Endothelial cell of umbilical vein (primary cell): ENCODE measurements at regions of chr6 and their contacts with region 1.

Region 1: GRCh38 chr6:31366693-31367470 is 9.9 kb upstream of the HLA-B start:
- DNase-seq: peak; percentile 80
- H3K4me3 ChIP-seq: no peak overlapping the region
- H3K27ac ChIP-seq: no peak overlapping the region
- H3K4me1 ChIP-seq: no peaks in the 10 kb centered on the region
- H3K27me3 ChIP-seq: peaks cover 39 to 44% of the 10 kb centered on the region in 2 experiments
- CTCF ChIP-seq: peak; percentile 93 to 95
- POLR2A ChIP-seq: no peak

Region 2: GRCh38 chr6:31143148-31143547 is 223.7 kb before region 1 on chr6:
- CTCF ChIA-PET with region 1: interaction called, 33 read pairs
- POLR2A ChIA-PET with region 1: no interaction called
- dilution Hi-C with region 1: no loop called
- intact Hi-C with region 1: no loop called
- DNase-seq: no peak
- H3K4me3 ChIP-seq: no peak overlapping the region
- H3K27ac ChIP-seq: no peak overlapping the region
- H3K4me1 ChIP-seq: peaks cover 8% of the 10 kb centered on the region
- H3K27me3 ChIP-seq: no peaks in the 10 kb centered on the region
- CTCF ChIP-seq: no peak
- POLR2A ChIP-seq: no peak

Region 3: DNA sequence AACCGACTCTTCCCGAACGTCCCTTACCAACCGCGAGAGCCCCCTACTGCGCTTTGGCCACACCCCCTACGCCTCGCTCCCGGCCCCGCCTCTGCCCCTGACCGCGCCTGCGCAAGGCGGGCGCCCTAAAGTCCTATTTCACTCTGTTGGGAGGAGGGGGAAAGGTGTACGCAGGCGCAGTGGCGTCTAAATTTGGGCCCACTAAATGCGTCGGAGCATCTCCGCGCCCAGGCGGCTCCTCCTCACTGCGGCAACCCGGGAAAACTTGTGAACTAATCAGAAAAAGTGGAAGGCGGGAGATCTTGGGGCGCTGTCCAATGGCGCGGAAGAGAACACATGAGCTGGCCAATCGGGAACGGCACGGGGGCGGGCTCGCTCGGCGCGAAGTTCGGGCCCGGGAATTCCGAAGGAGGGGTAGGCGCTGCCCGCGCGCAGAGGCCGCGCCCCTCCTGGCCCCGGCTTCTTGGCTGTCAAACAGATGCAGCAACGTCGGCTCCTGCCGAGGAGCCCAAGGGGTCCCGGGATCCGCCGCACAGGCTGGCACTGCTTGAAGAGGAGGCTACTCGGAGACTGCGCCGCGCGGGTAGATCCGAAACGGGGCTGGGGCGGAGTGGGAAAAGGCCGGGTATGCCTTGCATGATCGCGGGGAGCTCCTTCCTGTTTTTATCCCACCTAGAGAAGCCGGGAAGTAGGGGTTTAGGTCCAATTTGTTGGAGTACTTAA is 208.6 kb before region 1 on chr6 and contains the start of gene TCF19:
- CTCF ChIA-PET with region 1: interaction called, 10 read pairs
- POLR2A ChIA-PET with region 1: no interaction called
- dilution Hi-C with region 1: no loop called
- intact Hi-C with region 1: no loop called
- DNase-seq: peak; percentile 100
- H3K4me3 ChIP-seq: peak within 1 kb of the TSS; percentile 72 to 90 (median 90)
- H3K27ac ChIP-seq: peak within 1 kb of the TSS; percentile 30
- H3K4me1 ChIP-seq: peaks cover 12% of the 10 kb centered on the region
- H3K27me3 ChIP-seq: no peaks in the 10 kb centered on the region
- CTCF ChIP-seq: no peak
- POLR2A ChIP-seq: peak; percentile 3
- total RNA-seq, gene TCF19: 28.0 and 31.7 TPM in 2 replicates

Region 4: GRCh38 chr6:31239854-31240253 is 127.0 kb before region 1 on chr6:
- CTCF ChIA-PET with region 1: interaction called, 12 read pairs
- POLR2A ChIA-PET with region 1: no interaction called
- dilution Hi-C with region 1: no loop called
- intact Hi-C with region 1: no loop called
- DNase-seq: no peak
- H3K4me3 ChIP-seq: no peak overlapping the region
- H3K27ac ChIP-seq: no peak overlapping the region
- H3K4me1 ChIP-seq: no peaks in the 10 kb centered on the region
- H3K27me3 ChIP-seq: peaks cover 14 to 20% of the 10 kb centered on the region in 2 experiments
- CTCF ChIP-seq: no peak
- POLR2A ChIP-seq: no peak

Region 5: DNA sequence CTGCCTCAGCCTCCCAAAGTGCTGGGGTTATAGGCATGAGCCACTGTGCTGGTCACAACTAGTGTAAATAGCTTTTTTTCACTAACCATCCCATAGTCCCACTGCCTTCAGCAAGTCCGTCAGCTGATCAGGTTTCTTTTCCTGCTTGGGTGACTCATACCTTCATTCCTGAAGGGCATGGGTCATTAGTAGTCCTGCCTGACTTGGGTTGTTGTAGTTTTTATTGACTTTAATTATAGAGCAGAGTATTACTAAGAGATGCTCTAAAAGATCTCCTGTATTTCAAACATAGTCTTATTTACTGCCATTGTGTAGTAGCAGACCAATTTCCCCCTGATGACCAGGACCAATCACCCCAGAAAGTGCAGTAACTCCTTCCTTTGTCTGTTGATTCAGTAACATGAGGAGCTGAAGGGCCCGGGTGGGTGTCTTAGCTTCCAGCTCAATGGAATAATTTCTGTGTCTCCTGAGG is 120.8 kb before region 1 on chr6:
- CTCF ChIA-PET with region 1: interaction called, 10 read pairs
- POLR2A ChIA-PET with region 1: no interaction called
- dilution Hi-C with region 1: no loop called
- intact Hi-C with region 1: no loop called
- DNase-seq: peak; percentile 66
- H3K4me3 ChIP-seq: no peak overlapping the region
- H3K27ac ChIP-seq: no peak overlapping the region
- H3K4me1 ChIP-seq: peaks cover 3% of the 10 kb centered on the region
- H3K27me3 ChIP-seq: peaks cover 5 to 22% of the 10 kb centered on the region in 2 experiments
- CTCF ChIP-seq: no peak
- POLR2A ChIP-seq: no peak

Region 6: DNA sequence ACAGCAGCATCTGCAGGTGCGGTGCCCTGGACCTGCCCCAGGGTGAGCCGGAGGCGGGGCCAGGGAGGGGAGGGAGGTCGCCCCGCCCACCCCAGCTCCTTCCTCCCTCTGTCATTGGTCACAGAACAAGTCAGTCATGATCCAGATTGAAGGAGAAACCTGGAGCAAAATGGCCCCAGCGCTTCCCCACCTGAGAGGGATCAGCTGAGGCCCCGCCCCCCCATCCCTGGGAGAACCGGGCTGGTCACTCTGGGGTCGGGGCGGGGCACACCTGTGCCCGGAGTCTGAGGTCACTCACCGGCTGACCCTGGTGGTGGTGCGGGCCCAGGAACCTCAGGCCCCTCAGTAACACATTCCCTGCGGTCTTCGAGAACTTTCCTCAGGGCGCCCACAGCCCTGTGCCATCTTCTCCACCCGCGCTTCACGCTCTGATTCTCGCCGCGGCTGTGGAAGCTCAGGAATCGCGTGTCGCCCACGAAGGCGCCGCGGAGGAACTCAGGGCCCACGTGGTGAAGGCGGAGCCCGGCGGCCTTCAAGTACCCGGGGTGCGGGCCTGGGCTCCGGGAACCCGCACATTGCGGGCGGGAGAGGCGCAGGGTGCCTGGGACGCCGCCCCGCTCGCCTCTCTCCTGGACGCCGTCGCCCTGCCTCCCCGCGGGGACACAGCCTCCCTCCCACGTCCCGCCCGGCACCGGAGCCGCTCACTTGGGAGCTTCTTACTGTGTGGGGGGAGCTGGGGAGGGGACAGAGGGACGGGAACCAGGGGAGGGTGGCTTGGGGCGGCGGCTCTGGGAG is 58.6 kb before region 1 on chr6:
- CTCF ChIA-PET with region 1: interaction called, 11 read pairs
- POLR2A ChIA-PET with region 1: no interaction called
- dilution Hi-C with region 1: no loop called
- intact Hi-C with region 1: no loop called
- DNase-seq: no peak
- H3K4me3 ChIP-seq: no peak overlapping the region
- H3K27ac ChIP-seq: no peak overlapping the region
- H3K4me1 ChIP-seq: no peaks in the 10 kb centered on the region
- H3K27me3 ChIP-seq: peaks cover 44% of the 10 kb centered on the region in 2 experiments
- CTCF ChIP-seq: no peak
- POLR2A ChIP-seq: no peak

Region 7: GRCh38 chr6:31383149-31383548 is 16.3 kb after region 1 on chr6:
- CTCF ChIA-PET with region 1: interaction called, 29 read pairs
- POLR2A ChIA-PET with region 1: no interaction called
- dilution Hi-C with region 1: no loop called
- intact Hi-C with region 1: no loop called
- DNase-seq: no peak
- H3K4me3 ChIP-seq: no peak overlapping the region
- H3K27ac ChIP-seq: no peak overlapping the region
- H3K4me1 ChIP-seq: no peaks in the 10 kb centered on the region
- H3K27me3 ChIP-seq: peaks cover 15 to 16% of the 10 kb centered on the region in 2 experiments
- CTCF ChIP-seq: no peak
- POLR2A ChIP-seq: no peak

Region 8: DNA sequence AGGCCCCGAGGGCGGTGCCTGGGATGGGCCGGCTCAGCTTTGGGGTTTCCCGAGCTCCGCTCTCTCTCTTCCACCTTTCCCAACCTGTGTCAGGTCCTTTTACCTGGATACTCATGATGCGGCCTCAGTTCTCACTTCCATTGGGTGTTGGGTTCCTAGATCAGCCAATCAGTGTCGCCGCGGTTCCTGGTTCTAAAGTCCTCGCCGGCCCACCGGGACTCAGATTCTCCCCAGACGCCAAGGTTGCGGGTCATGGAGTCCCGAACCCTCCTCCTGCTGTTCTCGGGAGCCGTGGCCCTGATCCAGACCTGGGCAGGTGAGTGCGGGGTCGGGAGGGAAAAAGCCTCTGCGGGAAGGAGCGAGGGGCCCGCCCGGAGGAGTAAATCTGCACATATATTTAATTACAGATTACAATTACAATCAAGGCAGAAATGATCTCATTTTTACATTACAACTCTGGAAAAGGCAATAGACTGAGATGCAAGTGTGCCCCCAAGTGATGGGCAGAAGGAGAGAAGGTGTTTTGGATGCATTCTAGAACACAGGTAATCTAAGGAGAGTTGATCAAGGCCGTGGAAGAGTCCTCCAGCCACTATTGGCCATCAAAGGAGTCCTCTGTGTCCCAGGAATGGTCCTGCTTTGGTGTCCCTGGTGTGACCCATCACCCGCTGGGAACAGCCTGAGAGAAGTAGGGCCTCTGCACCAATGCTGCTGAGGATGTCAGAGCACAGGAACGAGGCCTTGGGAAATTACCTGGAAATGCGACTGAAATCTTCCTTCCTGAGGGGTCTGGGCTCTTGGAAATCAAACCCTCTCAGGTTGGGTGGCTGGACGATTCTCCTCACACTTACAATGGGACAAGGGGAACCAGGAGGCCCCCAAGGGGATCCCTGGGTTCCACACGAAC is 96.3 kb after region 1 on chr6:
- CTCF ChIA-PET with region 1: no interaction called
- POLR2A ChIA-PET with region 1: no interaction called
- dilution Hi-C with region 1: no loop called
- intact Hi-C with region 1: no loop called
- DNase-seq: peak; percentile 86
- H3K4me3 ChIP-seq: no peak overlapping the region
- H3K27ac ChIP-seq: no peak overlapping the region
- H3K4me1 ChIP-seq: no peaks in the 10 kb centered on the region
- H3K27me3 ChIP-seq: peaks cover 10 to 11% of the 10 kb centered on the region in 2 experiments
- CTCF ChIP-seq: no peak
- POLR2A ChIP-seq: no peak